ENCODE measurements at regions of chr17 and their contacts with region 1.

Region 1: DNA sequence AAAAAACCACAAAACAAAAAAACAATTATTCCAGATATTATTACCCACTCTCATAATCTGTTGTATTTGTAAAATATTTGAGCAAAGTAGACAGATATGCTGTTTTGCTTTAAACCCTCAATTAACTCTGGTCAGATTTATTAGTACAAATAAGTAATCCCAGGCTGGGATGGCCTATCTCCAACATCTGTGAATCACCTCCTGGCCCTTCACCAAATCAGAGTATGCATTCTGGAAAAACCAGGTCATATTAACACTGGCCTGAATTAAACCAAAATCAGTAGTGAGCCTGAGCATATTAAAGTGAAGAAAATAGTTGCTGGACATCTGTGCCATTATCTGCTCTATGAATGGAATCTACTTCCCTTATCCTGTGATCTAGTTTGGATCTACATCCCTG is 41.0 kb downstream of the STAT3 start:
- DNase-seq: peak; percentile 29 to 77
- H3K4me3 ChIP-seq: no peak overlapping the region
- H3K27ac ChIP-seq: peak overlapping the region; percentile 47
- H3K4me1 ChIP-seq: peaks cover 14% of the 10 kb centered on the region
- H3K27me3 ChIP-seq: no peaks in the 10 kb centered on the region
- CTCF ChIP-seq: no peak

Region 2: GRCh38 chr17:42378597-42379594 is 31.7 kb after region 1 on chr17:
- CTCF ChIA-PET with region 1: no interaction called
- POLR2A ChIA-PET with region 1: interaction called, 13 read pairs
- intact Hi-C with region 1: no loop called
- DNase-seq: no peak
- H3K4me3 ChIP-seq: no peak overlapping the region
- H3K27ac ChIP-seq: no peak overlapping the region
- H3K4me1 ChIP-seq: no peaks in the 10 kb centered on the region
- H3K27me3 ChIP-seq: no peaks in the 10 kb centered on the region
- CTCF ChIP-seq: no peak

Region 3: DNA sequence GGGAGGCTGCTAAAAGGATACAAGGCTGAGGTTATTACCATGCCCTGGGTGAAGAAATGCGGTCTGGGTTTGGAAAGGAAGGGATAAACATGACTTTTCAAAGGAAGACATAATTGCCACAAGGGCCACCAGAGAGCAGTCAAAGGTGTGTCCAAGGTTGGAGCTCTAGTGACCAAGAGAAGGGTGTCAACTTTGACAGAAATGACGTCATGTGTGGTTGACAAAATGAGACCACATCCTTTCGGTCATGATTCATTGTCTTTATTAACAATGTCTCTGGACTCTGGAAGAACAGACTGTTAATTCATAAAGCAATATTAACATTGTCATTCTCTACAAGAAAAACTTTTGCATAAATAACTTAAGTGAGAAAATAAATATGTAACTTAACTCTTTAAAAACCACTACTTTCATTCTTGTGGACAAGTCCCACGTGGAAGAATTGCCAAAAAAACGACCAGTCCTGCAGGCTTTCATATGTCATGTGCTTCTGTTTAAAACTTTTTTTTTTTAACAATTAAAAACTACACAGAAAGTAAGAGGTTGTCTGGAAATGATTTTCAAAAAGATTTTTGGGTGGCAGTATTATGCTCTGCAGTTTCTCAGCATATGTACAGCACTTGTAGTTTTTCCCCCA is 1406.4 kb after region 1 on chr17:
- CTCF ChIA-PET with region 1: no interaction called
- POLR2A ChIA-PET with region 1: no interaction called
- intact Hi-C with region 1: no loop called
- DNase-seq: peak; percentile 17 to 75
- H3K4me3 ChIP-seq: no peak overlapping the region
- H3K27ac ChIP-seq: peak overlapping the region; percentile 40
- H3K4me1 ChIP-seq: peaks cover 42% of the 10 kb centered on the region
- H3K27me3 ChIP-seq: no peaks in the 10 kb centered on the region
- CTCF ChIP-seq: no peak

Measured in PC-9 (cell line).